ENCODE measurements at regions of chr17 and their contacts with region 1.

Region 1: GRCh38 chr17:40474419-40475002 is 26.9 kb downstream of the TNS4 start:
- DNase-seq: no peak
- H3K4me3 ChIP-seq: no peak overlapping the region
- H3K4me3 Mint-ChIP-seq: no peak overlapping the region
- H3K27ac Mint-ChIP-seq: no peak overlapping the region
- H3K4me1 ChIP-seq: no peaks in the 10 kb centered on the region
- H3K4me1 Mint-ChIP-seq: no peaks in the 10 kb centered on the region
- H3K27me3 ChIP-seq: no peaks in the 10 kb centered on the region
- H3K27me3 Mint-ChIP-seq: no peaks in the 10 kb centered on the region
- CTCF ChIP-seq: no peak

Region 2: DNA sequence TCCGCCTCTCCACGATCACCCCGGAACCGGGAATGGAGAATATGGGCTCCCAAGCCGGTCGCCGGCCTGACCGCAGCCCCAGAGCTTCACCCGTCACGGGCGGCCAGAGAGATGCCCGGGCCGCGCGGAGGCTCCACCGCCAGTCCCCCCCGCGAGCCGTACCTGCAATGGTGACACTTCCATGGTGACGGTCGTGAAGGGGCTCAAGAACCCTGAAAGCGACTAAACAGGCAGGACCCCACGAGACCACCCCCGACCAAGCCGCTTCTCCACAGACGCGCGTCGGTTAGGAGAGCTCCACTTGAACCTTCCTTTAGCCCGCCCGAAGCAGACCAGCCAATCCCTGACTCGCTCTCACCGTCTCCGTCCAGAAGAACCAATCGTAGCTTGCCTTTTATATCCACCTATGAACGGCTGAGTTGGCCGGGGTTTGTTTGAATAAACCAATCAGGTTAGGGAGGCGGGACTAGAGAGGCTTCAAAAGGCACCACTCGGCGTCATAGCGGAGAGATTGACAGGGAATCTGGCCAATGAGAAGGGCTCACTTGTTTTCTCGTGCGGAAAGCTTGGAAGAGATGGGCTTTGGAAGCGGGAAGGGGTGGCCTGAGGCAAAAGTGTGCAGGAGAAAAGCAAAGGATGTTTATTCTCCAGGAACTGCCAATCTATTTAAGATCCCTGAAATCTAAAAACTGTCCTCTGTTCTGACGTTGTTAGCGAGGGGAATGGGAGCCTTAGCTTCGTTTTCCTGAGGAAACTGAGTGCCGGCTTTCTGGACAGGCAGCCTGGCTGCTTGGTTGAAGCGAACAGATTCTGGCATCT is 56.7 kb before region 1 on chr17 and contains the start of gene TOP2A:
- CTCF ChIA-PET with region 1: interaction called, 23 read pairs
- POLR2A ChIA-PET with region 1: no interaction called
- intact Hi-C with region 1: no loop called
- DNase-seq: peak; percentile 99 to 100
- H3K4me3 ChIP-seq: peak within 1 kb of the TSS; percentile 89
- H3K4me3 Mint-ChIP-seq: peak within 1 kb of the TSS; percentile 99
- H3K27ac Mint-ChIP-seq: peak within 1 kb of the TSS; percentile 99
- H3K4me1 ChIP-seq: peaks cover 16% of the 10 kb centered on the region; the same call in 1 of the 2 replicates
- H3K4me1 Mint-ChIP-seq: no peaks in the 10 kb centered on the region
- H3K27me3 ChIP-seq: no peaks in the 10 kb centered on the region
- H3K27me3 Mint-ChIP-seq: no peaks in the 10 kb centered on the region
- CTCF ChIP-seq: no peak
- total RNA-seq, gene TOP2A: 226 and 237 TPM in 2 replicates

Region 3: DNA sequence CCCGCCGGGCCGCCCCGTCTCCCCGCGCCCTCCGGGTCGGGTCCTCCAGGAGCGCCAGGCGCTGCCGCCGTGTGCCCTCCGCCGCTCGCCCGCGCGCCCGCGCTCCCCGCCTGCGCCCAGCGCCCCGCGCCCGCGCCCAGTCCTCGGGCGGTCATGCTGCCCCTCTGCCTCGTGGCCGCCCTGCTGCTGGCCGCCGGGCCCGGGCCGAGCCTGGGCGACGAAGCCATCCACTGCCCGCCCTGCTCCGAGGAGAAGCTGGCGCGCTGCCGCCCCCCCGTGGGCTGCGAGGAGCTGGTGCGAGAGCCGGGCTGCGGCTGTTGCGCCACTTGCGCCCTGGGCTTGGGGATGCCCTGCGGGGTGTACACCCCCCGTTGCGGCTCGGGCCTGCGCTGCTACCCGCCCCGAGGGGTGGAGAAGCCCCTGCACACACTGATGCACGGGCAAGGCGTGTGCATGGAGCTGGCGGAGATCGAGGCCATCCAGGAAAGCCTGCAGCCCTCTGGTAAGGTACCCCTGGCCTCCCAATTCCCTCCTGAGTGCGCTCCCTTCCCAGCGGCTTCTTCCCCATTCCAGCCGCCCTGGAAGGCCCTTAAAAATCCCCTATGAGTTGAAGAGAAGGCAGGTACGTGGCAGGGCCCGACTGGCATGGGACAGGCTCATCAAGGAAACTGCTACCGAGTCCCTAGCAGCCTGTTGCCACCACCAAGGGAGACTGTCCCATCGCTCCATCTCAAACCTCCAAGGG is 30.8 kb before region 1 on chr17:
- CTCF ChIA-PET with region 1: interaction called, 28 read pairs
- POLR2A ChIA-PET with region 1: no interaction called
- intact Hi-C with region 1: loop called (anchors 1 kb)
- DNase-seq: peak; percentile 81 to 89
- H3K4me3 ChIP-seq: peak overlapping the region; percentile 61
- H3K4me3 Mint-ChIP-seq: peak overlapping the region; percentile 26
- H3K27ac Mint-ChIP-seq: no peak overlapping the region
- H3K4me1 ChIP-seq: peaks cover 14% of the 10 kb centered on the region
- H3K4me1 Mint-ChIP-seq: peaks cover 20% of the 10 kb centered on the region
- H3K27me3 ChIP-seq: no peaks in the 10 kb centered on the region
- H3K27me3 Mint-ChIP-seq: no peaks in the 10 kb centered on the region
- CTCF ChIP-seq: peak; percentile 40 to 78

Region 4: DNA sequence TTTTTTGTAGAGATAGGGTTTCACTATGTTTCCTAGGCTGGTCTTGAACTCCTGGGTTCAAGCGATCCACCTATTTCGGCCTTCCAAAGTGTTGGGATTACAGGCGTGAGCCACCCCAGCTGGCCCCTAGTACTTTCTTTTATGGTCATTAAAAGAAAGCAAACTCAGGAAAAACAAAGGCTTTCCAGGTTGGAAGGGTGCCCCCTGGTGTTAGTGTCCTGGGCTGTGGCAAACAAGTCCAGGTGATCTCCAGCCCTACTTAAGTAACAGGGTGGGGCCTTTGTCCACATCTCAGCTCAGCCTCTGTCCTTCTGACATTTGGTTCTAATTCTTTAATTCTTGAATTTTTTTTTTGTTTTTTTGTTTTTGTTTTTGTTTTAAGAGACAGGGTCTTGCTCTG is 24.3 kb before region 1 on chr17:
- CTCF ChIA-PET with region 1: interaction called, 18 read pairs
- POLR2A ChIA-PET with region 1: no interaction called
- intact Hi-C with region 1: no loop called
- DNase-seq: peak; percentile 74 to 77
- H3K4me3 ChIP-seq: no peak overlapping the region
- H3K4me3 Mint-ChIP-seq: no peak overlapping the region
- H3K27ac Mint-ChIP-seq: no peak overlapping the region
- H3K4me1 ChIP-seq: peaks cover 17% of the 10 kb centered on the region
- H3K4me1 Mint-ChIP-seq: peaks cover 9% of the 10 kb centered on the region
- H3K27me3 ChIP-seq: no peaks in the 10 kb centered on the region
- H3K27me3 Mint-ChIP-seq: no peaks in the 10 kb centered on the region
- CTCF ChIP-seq: peak; percentile 48 to 69

Region 5: GRCh38 chr17:40464392-40464855 is 10.1 kb before region 1 on chr17:
- CTCF ChIA-PET with region 1: interaction called, 11 read pairs
- POLR2A ChIA-PET with region 1: no interaction called
- intact Hi-C with region 1: no loop called
- DNase-seq: no peak
- H3K4me3 ChIP-seq: no peak overlapping the region
- H3K4me3 Mint-ChIP-seq: no peak overlapping the region
- H3K27ac Mint-ChIP-seq: no peak overlapping the region
- H3K4me1 ChIP-seq: no peaks in the 10 kb centered on the region
- H3K4me1 Mint-ChIP-seq: no peaks in the 10 kb centered on the region
- H3K27me3 ChIP-seq: no peaks in the 10 kb centered on the region
- H3K27me3 Mint-ChIP-seq: no peaks in the 10 kb centered on the region
- CTCF ChIP-seq: no peak

Region 6: GRCh38 chr17:40499551-40500174 is 25.2 kb after region 1 on chr17:
- CTCF ChIA-PET with region 1: interaction called, 15 read pairs
- POLR2A ChIA-PET with region 1: no interaction called
- intact Hi-C with region 1: no loop called
- DNase-seq: peak; percentile 55 to 68
- H3K4me3 ChIP-seq: no peak overlapping the region
- H3K4me3 Mint-ChIP-seq: no peak overlapping the region
- H3K27ac Mint-ChIP-seq: no peak overlapping the region
- H3K4me1 ChIP-seq: peaks cover 5% of the 10 kb centered on the region; the same call in 1 of the 2 replicates
- H3K4me1 Mint-ChIP-seq: peaks cover 6% of the 10 kb centered on the region
- H3K27me3 ChIP-seq: no peaks in the 10 kb centered on the region
- H3K27me3 Mint-ChIP-seq: no peaks in the 10 kb centered on the region
- CTCF ChIP-seq: no peak

Region 7: GRCh38 chr17:40516581-40517285 is 42.2 kb after region 1 on chr17:
- CTCF ChIA-PET with region 1: no interaction called
- POLR2A ChIA-PET with region 1: no interaction called
- intact Hi-C with region 1: no loop called
- DNase-seq: peak; percentile 26 to 63
- H3K4me3 ChIP-seq: no peak overlapping the region
- H3K4me3 Mint-ChIP-seq: no peak overlapping the region
- H3K27ac Mint-ChIP-seq: peak overlapping the region; percentile 5
- H3K4me1 ChIP-seq: peaks cover 40% of the 10 kb centered on the region
- H3K4me1 Mint-ChIP-seq: peaks cover 15% of the 10 kb centered on the region
- H3K27me3 ChIP-seq: no peaks in the 10 kb centered on the region; the same call in 1 of the 2 replicates
- H3K27me3 Mint-ChIP-seq: no peaks in the 10 kb centered on the region
- CTCF ChIP-seq: no peak